ENCODE measurements at regions of chr12 and their contacts with region 1.

Region 1: GRCh38 chr12:48157018-48157888 is at the start of gene ASB8:
- DNase-seq: peak; percentile 99

Region 2: DNA sequence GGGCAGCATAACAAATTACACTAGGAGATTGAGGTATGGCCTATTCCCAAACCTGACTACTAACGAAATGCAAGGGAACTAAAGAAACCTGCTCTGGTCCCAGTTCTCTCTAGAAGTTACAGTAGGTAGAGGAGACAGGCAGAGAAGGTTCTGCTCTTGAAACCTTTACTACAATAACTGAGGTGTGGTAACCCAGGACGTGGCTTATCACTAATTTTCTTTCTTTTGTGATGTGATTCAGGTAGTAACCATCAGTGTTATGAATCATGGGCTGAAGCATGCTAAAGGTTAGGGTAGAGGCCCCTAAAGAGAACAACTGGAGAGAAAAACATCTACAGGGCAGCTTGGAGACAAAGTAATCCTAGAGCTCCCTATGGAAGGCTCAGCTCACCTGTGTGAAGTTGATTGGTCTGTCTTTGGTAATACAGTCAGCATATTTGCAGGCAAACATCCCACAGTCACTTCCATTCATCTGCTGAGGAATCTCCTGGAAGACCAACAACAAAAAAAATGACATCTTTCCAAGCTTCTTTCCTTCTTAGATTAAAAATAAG is 111.2 kb before region 1 on chr12:
- CTCF ChIA-PET with region 1: no interaction called
- POLR2A ChIA-PET with region 1: no interaction called
- DNase-seq: no peak

Region 3: GRCh38 chr12:48069241-48069640 is 88.0 kb before region 1 on chr12:
- CTCF ChIA-PET with region 1: no interaction called
- POLR2A ChIA-PET with region 1: no interaction called
- DNase-seq: no peak

Region 4: DNA sequence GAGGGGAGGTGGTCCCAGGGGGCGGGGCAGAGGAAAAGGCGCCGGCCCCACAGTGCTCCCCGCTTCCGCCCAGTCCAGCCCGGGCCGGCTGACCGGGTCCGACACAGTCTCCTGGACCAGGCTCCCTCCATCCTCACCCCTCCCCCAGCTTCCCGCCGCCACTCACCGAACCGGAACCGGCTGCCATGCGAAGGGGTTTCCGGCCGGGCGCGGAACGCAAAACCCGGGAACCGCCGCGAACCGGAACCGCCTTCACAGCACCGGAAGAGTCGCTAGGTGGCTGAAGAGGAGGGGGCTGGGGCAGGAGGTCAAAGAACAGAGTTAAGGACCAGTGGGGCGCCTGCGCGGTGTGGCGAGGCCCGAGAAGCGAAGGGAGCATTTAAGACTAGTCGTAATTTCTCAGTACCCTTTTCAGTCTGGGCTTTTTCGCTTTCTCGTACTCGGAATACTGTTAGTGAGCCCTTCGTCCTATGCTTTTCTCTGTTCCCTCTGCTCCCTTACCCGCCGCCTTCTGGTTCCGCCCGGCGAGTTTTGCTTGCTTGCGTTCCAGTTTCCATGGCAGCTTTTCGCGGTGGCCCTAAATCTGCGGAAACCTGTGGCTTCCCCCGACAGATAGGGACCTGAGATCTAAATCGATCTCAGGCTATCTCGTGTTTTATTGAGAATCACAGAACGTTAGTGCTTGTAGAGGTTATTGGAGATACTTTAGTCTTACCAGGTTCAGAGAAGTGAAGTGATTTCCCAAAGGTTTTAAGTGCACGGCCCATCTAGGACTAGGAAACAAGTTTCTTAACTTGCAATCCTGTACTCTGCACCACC is 51.2 kb before region 1 on chr12 and contains the start of gene SENP1:
- CTCF ChIA-PET with region 1: no interaction called
- POLR2A ChIA-PET with region 1: interaction called, 26 read pairs
- DNase-seq: peak; percentile 80

Region 5: GRCh38 chr12:48119078-48119833 is 38.0 kb before region 1 on chr12 and contains the start of gene PFKM:
- CTCF ChIA-PET with region 1: no interaction called
- POLR2A ChIA-PET with region 1: interaction called, 13 read pairs
- DNase-seq: peak; percentile 93

Region 6: GRCh38 chr12:48183091-48183875 is 26.0 kb after region 1 on chr12 and contains the start of gene CCDC184:
- CTCF ChIA-PET with region 1: no interaction called
- POLR2A ChIA-PET with region 1: interaction called, 13 read pairs
- DNase-seq: peak; percentile 77

Region 7: GRCh38 chr12:48302161-48302911 is 145.1 kb after region 1 on chr12:
- CTCF ChIA-PET with region 1: no interaction called
- POLR2A ChIA-PET with region 1: no interaction called
- DNase-seq: no peak

Region 8: GRCh38 chr12:48601013-48601756 is 443.9 kb after region 1 on chr12:
- CTCF ChIA-PET with region 1: no interaction called
- POLR2A ChIA-PET with region 1: no interaction called
- DNase-seq: no peak

Measured in HEK293T (cell line).